ENCODE measurements at regions of chr4 and their contacts with region 1.

Region 1: DNA sequence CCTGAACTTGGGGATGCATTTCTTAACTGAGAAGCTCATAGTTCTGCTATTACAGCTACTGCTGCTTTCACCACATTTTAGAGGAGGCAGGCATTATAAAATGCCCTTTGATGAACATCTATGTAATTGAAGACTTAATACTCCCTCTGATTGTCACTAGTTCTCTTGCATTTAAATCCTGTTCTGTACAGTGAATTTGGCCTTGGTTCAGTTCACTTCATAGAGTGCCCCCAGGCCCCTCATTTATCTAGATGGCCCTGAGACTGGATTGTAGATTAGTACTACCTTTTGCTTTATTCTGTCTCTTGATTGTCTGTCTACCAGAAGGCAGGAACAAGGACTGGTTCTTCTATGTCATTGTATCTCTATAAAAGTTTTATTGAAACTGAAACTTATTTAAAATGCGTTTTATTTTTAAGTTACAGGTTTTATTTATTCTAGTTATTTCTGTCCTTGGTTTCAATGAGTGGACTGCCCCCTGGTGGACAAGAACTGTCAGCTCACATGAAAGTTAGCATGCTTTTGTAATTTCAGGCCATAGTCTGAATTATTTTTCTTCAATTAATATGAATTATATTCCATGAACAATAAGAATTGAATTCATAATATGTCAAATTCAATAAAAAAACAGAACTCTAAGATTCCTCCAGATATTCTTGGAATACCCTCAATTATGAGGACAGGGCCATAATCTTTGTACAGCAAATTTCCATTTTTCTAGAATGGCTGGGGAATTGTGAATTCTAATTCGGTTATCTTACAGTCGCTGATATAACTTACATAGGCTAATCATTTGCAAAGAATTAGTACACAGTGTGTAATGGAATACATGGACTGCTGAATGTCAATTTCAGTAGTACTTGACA is 47.2 kb upstream of the TMEM33 start:
- DNase-seq: peak in 1 of 4 donors; percentile 55
- ATAC-seq: peak; percentile 58
- H3K4me3 ChIP-seq: no peak overlapping the region
- H3K27ac ChIP-seq: no peak overlapping the region
- H3K4me1 ChIP-seq: no peaks in the 10 kb centered on the region
- H3K27me3 ChIP-seq: peaks cover 7 to 61% of the 10 kb centered on the region in 2 donors
- CTCF ChIP-seq: peak; percentile 80 to 93

Region 2: GRCh38 chr4:41579526-41579925 is 308.5 kb before region 1 on chr4:
- intact Hi-C with region 1: no loop called
- DNase-seq: peak in 1 of 4 donors; percentile 29
- ATAC-seq: peak; percentile 12
- H3K4me3 ChIP-seq: no peak overlapping the region
- H3K27ac ChIP-seq: peak overlapping the region in 1 of 2 donors; percentile 23
- H3K4me1 ChIP-seq: peaks cover 4 to 8% of the 10 kb centered on the region in 2 donors
- H3K27me3 ChIP-seq: no peaks in the 10 kb centered on the region
- CTCF ChIP-seq: no peak

Region 3: GRCh38 chr4:41687971-41688370 is 200.1 kb before region 1 on chr4:
- intact Hi-C with region 1: loop called in 1 of 2 experiments (anchors 5 kb)
- DNase-seq: no peak
- ATAC-seq: no peak
- H3K4me3 ChIP-seq: no peak overlapping the region
- H3K27ac ChIP-seq: no peak overlapping the region
- H3K4me1 ChIP-seq: no peaks in the 10 kb centered on the region
- H3K27me3 ChIP-seq: no peaks in the 10 kb centered on the region
- CTCF ChIP-seq: no peak